Body of pancreas (tissue), 4 donors: ENCODE measurements at regions of chr1 and their contacts with region 1.

Region 1: GRCh38 chr1:61343734-61344420 is 261.5 kb downstream of the NFIA start:
- DNase-seq: no peak
- ATAC-seq: no peak
- H3K4me3 ChIP-seq: no peak overlapping the region
- H3K27ac ChIP-seq: peak overlapping the region in 2 of 4 donors; percentile 12 to 19
- H3K4me1 ChIP-seq: peaks cover 26% of the 10 kb centered on the region
- H3K27me3 ChIP-seq: no peaks in the 10 kb centered on the region
- CTCF ChIP-seq: no peak
- POLR2A ChIP-seq: no peak

Region 2: GRCh38 chr1:61043010-61043820 is 300.7 kb before region 1 on chr1:
- intact Hi-C with region 1: loop called (anchors 5 kb)
- DNase-seq: peak; percentile 87 to 92 (median 89)
- ATAC-seq: peak; percentile 96
- H3K4me3 ChIP-seq: peak overlapping the region; percentile 35 to 70
- H3K27ac ChIP-seq: peak overlapping the region; percentile 23 to 87 (median 66)
- H3K4me1 ChIP-seq: peaks cover 4% of the 10 kb centered on the region
- H3K27me3 ChIP-seq: no peaks in the 10 kb centered on the region
- CTCF ChIP-seq: peak; percentile 81 to 90 (median 87)
- POLR2A ChIP-seq: peak in 2 of 3 donors; percentile 46 to 51

Region 3: DNA sequence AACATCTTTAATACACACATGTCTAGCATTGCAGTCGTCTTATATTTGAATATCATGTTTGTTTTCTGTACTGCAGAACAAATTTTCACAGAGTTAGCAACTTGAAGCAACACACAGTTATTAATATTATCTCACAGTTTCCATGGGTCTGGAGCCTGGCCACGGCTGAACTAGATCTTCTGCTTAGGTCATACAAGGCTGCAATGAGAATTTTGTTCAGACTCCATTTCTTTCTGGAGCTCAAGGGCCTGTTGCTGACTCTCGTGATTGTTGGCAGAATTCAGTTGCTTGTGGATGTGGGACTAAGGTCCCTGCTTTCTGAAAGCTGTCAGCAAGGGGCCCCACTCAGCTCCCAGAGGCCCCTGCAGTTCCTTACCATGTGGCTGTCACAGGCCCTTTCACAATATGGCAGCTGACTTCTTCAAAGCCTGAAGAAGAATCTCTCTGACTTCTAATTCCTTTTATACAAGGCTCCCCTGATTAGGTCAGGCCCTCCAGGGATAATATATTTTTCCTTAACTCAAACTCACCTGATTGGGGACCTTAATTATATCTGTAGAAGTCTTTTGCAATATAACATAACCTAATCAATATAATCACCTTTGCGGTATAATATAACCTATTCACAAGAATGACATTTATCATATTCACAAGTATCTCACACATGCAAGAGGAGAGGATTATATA is 34.8 kb after region 1 on chr1:
- intact Hi-C with region 1: no loop called
- DNase-seq: no peak
- ATAC-seq: no peak
- H3K4me3 ChIP-seq: no peak overlapping the region
- H3K27ac ChIP-seq: no peak overlapping the region
- H3K4me1 ChIP-seq: no peaks in the 10 kb centered on the region
- H3K27me3 ChIP-seq: no peaks in the 10 kb centered on the region
- CTCF ChIP-seq: no peak
- POLR2A ChIP-seq: no peak

Region 4: GRCh38 chr1:61403679-61404596 is 60.1 kb after region 1 on chr1:
- intact Hi-C with region 1: no loop called
- DNase-seq: peak in 1 of 4 donors; percentile 5
- ATAC-seq: peak; percentile 67
- H3K4me3 ChIP-seq: no peak overlapping the region
- H3K27ac ChIP-seq: peak overlapping the region; percentile 14 to 64 (median 44)
- H3K4me1 ChIP-seq: peaks cover 19% of the 10 kb centered on the region
- H3K27me3 ChIP-seq: no peaks in the 10 kb centered on the region
- CTCF ChIP-seq: no peak
- POLR2A ChIP-seq: no peak

Region 5: GRCh38 chr1:61424382-61424781 is 80.5 kb after region 1 on chr1:
- intact Hi-C with region 1: no loop called
- DNase-seq: no peak
- ATAC-seq: no peak
- H3K4me3 ChIP-seq: no peak overlapping the region
- H3K27ac ChIP-seq: no peak overlapping the region
- H3K4me1 ChIP-seq: no peaks in the 10 kb centered on the region
- H3K27me3 ChIP-seq: no peaks in the 10 kb centered on the region
- CTCF ChIP-seq: no peak
- POLR2A ChIP-seq: no peak